ENCODE measurements at regions of chr3 and their contacts with region 1.

Region 1: GRCh38 chr3:160399125-160400029 is at the starts of genes IFT80 and SMC4:
- DNase-seq: peak; percentile 98
- H3K4me3 Mint-ChIP-seq: peak within 1 kb of the TSS; percentile 98
- H3K27ac Mint-ChIP-seq: peak within 1 kb of the TSS; percentile 98
- H3K4me1 Mint-ChIP-seq: peaks cover 44% of the 10 kb centered on the region
- H3K27me3 Mint-ChIP-seq: peaks cover 4% of the 10 kb centered on the region
- total RNA-seq, gene IFT80: 13.4 to 13.9 TPM
- total RNA-seq, gene SMC4: 143 to 157 TPM

Region 2: DNA sequence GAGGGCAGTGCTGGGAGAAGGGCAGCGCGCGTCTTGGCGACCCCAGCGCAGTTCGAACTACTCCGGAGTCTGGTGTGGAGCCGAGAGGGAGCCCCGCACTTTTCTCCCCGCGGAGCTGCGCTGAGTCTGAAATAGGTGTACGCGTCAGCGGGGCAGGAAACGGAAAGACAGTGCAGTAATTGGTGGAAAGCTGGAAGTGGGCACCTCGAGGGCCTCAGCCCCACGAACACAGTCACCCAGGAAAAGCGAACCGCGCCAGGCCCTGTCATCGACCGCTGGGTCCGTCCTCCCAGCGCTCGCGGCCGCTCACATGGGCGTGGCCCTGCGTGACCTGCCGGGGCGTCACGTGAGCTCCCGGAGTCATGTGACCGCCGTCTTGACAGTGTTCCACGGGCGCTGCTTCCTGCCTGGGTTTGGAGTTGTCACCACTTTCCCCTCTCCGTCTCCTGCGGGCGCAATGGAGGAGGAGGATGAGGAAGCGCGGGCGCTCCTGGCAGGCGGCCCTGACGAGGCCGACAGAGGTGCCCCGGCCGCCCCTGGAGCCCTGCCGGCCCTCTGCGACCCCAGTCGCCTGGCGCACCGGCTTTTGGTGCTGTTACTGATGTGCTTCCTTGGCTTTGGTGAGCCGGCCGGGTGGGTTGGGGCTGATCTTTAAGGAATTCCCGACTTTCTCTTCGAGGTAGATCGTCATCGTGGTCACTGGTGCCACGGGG is 1597.5 kb before region 1 on chr3 and contains the start of gene MFSD1:
- CTCF ChIA-PET with region 1: no interaction called
- POLR2A ChIA-PET with region 1: no interaction called
- intact Hi-C with region 1: loop called (anchors 5 kb)
- DNase-seq: peak; percentile 95
- H3K4me3 Mint-ChIP-seq: peak within 1 kb of the TSS; percentile 86
- H3K27ac Mint-ChIP-seq: peak within 1 kb of the TSS; percentile 87
- H3K4me1 Mint-ChIP-seq: peaks cover 23% of the 10 kb centered on the region
- H3K27me3 Mint-ChIP-seq: no peaks in the 10 kb centered on the region
- total RNA-seq, gene MFSD1: 11.9 to 12.4 TPM

Region 3: DNA sequence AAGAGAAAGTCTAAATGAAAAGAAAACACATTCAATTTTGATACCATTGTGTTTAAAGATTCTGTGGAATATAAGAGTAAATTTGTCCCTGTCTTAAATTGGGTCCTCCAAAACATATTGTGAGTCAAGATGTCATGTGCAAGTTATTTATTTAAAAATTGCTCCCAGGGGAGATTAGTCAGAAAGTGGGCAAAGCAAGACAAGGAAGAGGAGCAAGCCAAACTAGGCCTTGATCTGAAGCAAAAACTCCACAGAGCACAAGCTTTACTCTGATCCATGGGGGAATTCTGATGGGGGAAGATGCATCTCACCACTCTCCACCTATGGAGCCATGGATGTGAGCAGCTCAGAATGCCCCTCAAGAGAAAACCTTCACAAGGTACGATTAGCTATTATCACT is 753.5 kb before region 1 on chr3:
- CTCF ChIA-PET with region 1: no interaction called
- POLR2A ChIA-PET with region 1: no interaction called
- intact Hi-C with region 1: no loop called
- DNase-seq: no peak
- H3K4me3 Mint-ChIP-seq: no peak overlapping the region
- H3K27ac Mint-ChIP-seq: no peak overlapping the region
- H3K4me1 Mint-ChIP-seq: no peaks in the 10 kb centered on the region
- H3K27me3 Mint-ChIP-seq: no peaks in the 10 kb centered on the region

Region 4: DNA sequence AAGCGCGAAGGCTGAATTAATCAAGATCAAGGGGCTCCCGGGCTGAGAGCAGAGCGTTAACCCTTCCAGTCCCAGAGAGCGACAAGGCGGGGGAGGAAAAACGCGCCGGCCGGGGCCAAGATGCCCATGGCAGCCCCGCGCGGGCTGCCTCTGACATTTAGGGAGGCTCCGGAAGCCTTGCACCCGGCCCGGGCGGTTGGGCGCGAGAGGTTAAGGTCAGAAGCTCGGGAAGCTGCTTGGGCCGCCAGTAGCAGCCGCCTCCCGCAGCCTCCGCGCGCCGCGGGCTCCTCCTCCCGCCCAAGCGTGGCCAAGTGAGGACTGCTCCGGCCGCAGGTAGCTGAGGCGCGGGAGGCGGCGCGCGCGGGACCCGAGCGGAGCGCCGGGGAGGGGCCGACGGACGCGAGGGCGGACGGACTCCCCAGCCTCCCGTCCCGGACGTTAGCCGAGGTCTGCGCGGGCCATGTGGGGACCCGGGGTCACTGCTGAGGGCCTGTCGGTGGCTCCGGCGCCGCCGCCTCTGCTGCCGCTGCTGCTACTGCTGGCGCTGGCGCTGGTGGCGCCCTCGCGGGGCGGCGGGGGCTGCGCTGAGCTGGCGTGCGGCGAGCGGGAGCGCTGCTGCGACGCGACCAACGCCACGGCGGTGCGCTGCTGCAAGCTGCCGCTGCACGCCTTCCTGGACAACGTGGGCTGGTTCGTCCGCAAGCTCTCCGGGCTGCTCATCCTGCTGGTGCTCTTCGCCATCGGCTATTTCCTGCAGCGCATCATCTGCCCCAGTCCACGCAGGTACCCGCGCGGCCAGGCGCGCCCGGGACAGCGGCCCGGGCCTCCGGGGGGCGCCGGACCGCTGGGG is 174.0 kb before region 1 on chr3 and contains the start of gene C3orf80:
- CTCF ChIA-PET with region 1: interaction called, 3 read pairs
- POLR2A ChIA-PET with region 1: no interaction called
- intact Hi-C with region 1: loop called (anchors 2 kb)
- DNase-seq: peak; percentile 62
- H3K4me3 Mint-ChIP-seq: peak within 1 kb of the TSS; percentile 53
- H3K27ac Mint-ChIP-seq: no peak within 1 kb of the TSS
- H3K4me1 Mint-ChIP-seq: peaks cover 14% of the 10 kb centered on the region
- H3K27me3 Mint-ChIP-seq: peaks cover 51% of the 10 kb centered on the region
- total RNA-seq, gene C3orf80: not detected

Region 5: GRCh38 chr3:160449636-160450598 is 50.5 kb after region 1 on chr3 and contains the start of gene TRIM59:
- CTCF ChIA-PET with region 1: interaction called, 4 read pairs
- POLR2A ChIA-PET with region 1: interaction called, 31 read pairs
- intact Hi-C with region 1: loop called (anchors 1 kb)
- DNase-seq: peak; percentile 99
- H3K4me3 Mint-ChIP-seq: peak within 1 kb of the TSS; percentile 98
- H3K27ac Mint-ChIP-seq: peak within 1 kb of the TSS; percentile 99
- H3K4me1 Mint-ChIP-seq: peaks cover 28% of the 10 kb centered on the region
- H3K27me3 Mint-ChIP-seq: no peaks in the 10 kb centered on the region
- total RNA-seq, gene TRIM59: 27.3 to 30.0 TPM

Region 6: DNA sequence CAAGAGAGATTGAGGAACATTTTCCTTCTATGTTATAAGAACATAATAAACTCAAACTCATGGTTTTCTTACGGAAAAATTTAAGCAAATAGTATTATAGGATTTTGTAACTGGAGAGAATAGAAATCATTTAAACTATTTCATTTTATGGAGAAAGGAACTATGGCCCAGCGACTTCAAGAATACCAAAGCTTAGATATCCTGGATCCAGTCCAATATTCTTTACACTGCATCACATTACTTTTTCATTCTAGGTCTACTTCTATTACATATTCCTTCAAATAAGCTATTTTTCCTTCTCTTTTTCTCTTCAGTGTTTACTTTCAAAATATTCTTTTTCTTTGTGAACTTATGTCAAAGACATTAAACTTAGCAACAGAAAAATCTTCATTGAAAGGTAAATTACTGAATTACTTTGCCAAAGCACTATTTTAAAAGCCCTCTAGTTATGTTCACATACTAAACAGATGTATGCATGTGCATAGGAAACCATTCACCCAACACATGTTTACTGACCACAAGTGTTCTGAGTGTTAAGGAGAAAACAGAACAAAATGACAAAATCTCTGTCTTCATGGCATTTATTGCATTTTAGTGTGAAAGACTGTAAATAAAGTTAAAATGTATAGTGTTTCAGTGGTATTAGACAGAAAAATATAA is 145.6 kb after region 1 on chr3:
- CTCF ChIA-PET with region 1: no interaction called
- POLR2A ChIA-PET with region 1: no interaction called
- intact Hi-C with region 1: no loop called
- DNase-seq: no peak
- H3K4me3 Mint-ChIP-seq: no peak overlapping the region
- H3K27ac Mint-ChIP-seq: no peak overlapping the region
- H3K4me1 Mint-ChIP-seq: peaks cover 73% of the 10 kb centered on the region
- H3K27me3 Mint-ChIP-seq: no peaks in the 10 kb centered on the region

Region 7: DNA sequence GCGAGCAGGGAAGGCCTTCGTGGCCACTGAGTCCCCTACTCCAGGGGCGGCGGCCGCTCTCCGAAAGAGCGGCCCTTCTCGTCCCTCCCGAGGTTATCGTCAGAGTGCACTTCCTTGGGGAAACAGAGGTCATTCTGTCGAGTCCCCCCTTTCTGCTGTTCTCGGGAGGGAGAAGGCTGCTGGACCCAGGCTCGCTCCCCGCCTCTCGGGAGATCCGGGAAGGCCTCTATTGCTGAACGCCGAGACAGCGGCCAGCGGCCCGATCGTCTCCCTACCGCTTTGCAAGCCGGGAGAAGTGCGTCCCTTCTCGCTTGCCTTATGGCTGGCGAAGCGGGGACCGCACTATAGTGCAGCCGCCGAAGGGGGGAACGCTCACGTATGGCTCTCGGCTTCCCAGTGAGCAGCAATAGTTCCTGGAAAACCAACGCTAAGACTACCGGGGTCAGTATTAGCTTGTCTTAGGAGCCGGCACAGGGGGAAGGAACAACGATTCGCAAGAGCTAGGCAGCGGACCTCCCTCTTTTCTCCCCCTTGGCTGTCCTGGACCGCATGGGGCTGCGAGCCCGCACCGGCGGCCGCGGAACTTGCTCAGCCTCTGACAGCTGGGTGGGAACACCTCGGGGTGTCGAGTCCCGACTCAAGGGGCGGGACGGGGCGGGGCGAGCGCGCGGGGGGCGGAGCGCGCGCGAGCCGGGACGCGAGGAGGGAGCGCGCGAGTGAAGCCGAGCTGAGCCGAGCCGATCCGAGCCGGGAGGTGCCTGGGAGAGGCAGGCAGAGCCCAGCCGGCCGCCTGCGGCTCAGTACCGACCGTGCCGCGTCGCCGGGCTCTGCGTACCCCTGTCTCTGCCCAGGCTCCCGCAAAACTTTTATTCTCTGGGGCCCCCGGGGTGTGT is 355.7 kb after region 1 on chr3:
- CTCF ChIA-PET with region 1: no interaction called
- POLR2A ChIA-PET with region 1: no interaction called
- intact Hi-C with region 1: loop called (anchors 2 kb)
- DNase-seq: peak; percentile 94
- H3K4me3 Mint-ChIP-seq: peak overlapping the region; percentile 95
- H3K27ac Mint-ChIP-seq: peak overlapping the region; percentile 90
- H3K4me1 Mint-ChIP-seq: peaks cover 26% of the 10 kb centered on the region
- H3K27me3 Mint-ChIP-seq: peaks cover 12% of the 10 kb centered on the region